CD4-positive, alpha-beta T cell (primary cell): ENCODE measurements at regions of chr2 and their contacts with region 1.

Region 1: GRCh38 chr2:38602732-38603401 is at the start of gene HNRNPLL:
- DNase-seq: peak; percentile 87 to 96 (median 94)
- ATAC-seq: peak; percentile 80
- H3K4me3 ChIP-seq: peak within 1 kb of the TSS; percentile 62
- H3K4me3 Mint-ChIP-seq: peak within 1 kb of the TSS; percentile 99
- H3K27ac ChIP-seq: peak within 1 kb of the TSS; percentile 58 to 66
- H3K27ac Mint-ChIP-seq: peak within 1 kb of the TSS; percentile 97
- H3K4me1 ChIP-seq: peaks cover 28% of the 10 kb centered on the region
- H3K4me1 Mint-ChIP-seq: peaks cover 56% of the 10 kb centered on the region
- H3K27me3 ChIP-seq: no peaks in the 10 kb centered on the region
- H3K27me3 Mint-ChIP-seq: no peaks in the 10 kb centered on the region
- CTCF ChIP-seq: no peak
- total RNA-seq, gene HNRNPLL: 44.9 to 46.5 TPM

Region 2: GRCh38 chr2:38590053-38590452 is 12.8 kb before region 1 on chr2:
- CTCF ChIA-PET with region 1: interaction called, 48 read pairs
- POLR2A ChIA-PET with region 1: interaction called, 12 read pairs
- intact Hi-C with region 1: no loop called
- DNase-seq: peak in 2 of 14 experiments; percentile 39 to 52
- ATAC-seq: peak; percentile 46
- H3K4me3 ChIP-seq: no peak overlapping the region
- H3K4me3 Mint-ChIP-seq: peak overlapping the region; percentile 3
- H3K27ac ChIP-seq: no peak overlapping the region
- H3K27ac Mint-ChIP-seq: peak overlapping the region; percentile 48
- H3K4me1 ChIP-seq: peaks cover 29% of the 10 kb centered on the region
- H3K4me1 Mint-ChIP-seq: peaks cover 51% of the 10 kb centered on the region
- H3K27me3 ChIP-seq: no peaks in the 10 kb centered on the region
- H3K27me3 Mint-ChIP-seq: no peaks in the 10 kb centered on the region
- CTCF ChIP-seq: no peak

Region 3: GRCh38 chr2:38653715-38654527 is 51.1 kb after region 1 on chr2:
- CTCF ChIA-PET with region 1: interaction called, 16 read pairs
- POLR2A ChIA-PET with region 1: interaction called, 15 read pairs
- intact Hi-C with region 1: no loop called
- DNase-seq: peak in 10 of 14 experiments; percentile 19 to 82 (median 52)
- ATAC-seq: peak; percentile 78
- H3K4me3 ChIP-seq: no peak overlapping the region
- H3K4me3 Mint-ChIP-seq: no peak overlapping the region
- H3K27ac ChIP-seq: peak overlapping the region in 1 of 2 donors; percentile 64
- H3K27ac Mint-ChIP-seq: peak overlapping the region; percentile 80
- H3K4me1 ChIP-seq: peaks cover 52% of the 10 kb centered on the region
- H3K4me1 Mint-ChIP-seq: peaks cover 33% of the 10 kb centered on the region
- H3K27me3 ChIP-seq: no peaks in the 10 kb centered on the region
- H3K27me3 Mint-ChIP-seq: no peaks in the 10 kb centered on the region
- CTCF ChIP-seq: no peak

Region 4: GRCh38 chr2:38682008-38682575 is 79.2 kb after region 1 on chr2:
- CTCF ChIA-PET with region 1: interaction called, 20 read pairs
- POLR2A ChIA-PET with region 1: interaction called, 15 read pairs
- intact Hi-C with region 1: loop called in 1 of 2 experiments (anchors 5 kb)
- DNase-seq: peak in 4 of 14 experiments; percentile 28 to 82 (median 76)
- ATAC-seq: peak; percentile 88
- H3K4me3 ChIP-seq: peak overlapping the region; percentile 31
- H3K4me3 Mint-ChIP-seq: peak overlapping the region; percentile 49
- H3K27ac ChIP-seq: peak overlapping the region; percentile 71 to 78
- H3K27ac Mint-ChIP-seq: peak overlapping the region; percentile 86
- H3K4me1 ChIP-seq: peaks cover 55% of the 10 kb centered on the region
- H3K4me1 Mint-ChIP-seq: peaks cover 50% of the 10 kb centered on the region
- H3K27me3 ChIP-seq: no peaks in the 10 kb centered on the region
- H3K27me3 Mint-ChIP-seq: no peaks in the 10 kb centered on the region
- CTCF ChIP-seq: peak; percentile 23

Region 5: DNA sequence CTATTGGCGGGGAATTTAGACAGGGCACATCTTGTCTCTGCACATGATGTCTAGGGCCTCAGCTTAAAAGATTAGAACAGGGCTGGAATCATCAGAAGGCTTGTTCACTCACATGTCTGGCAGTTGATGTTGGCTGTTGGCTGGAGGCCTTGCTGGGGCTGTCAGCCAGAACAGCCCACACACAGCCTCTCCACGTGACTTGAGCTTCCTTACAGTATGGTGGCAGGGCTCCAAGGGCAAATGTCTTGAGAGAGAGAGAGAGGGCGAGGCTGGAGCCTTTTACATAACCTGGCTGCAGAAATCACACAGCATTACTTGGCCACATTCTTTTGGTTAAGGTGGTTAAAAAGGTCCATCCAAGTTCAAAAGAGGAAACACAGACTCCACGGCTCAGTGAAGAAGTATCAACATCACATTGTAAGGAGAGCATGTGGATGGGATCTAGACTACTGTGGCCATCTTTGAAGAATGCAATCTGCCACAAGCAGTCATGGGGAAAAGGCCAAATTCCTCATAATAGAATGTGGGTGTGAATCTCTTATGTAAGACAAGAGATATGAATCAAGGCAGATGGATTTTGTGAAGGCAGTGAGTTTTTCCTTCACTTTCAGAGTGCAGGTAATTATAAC is 117.9 kb after region 1 on chr2:
- CTCF ChIA-PET with region 1: interaction called, 47 read pairs
- POLR2A ChIA-PET with region 1: interaction called, 8 read pairs
- intact Hi-C with region 1: no loop called
- DNase-seq: no peak
- ATAC-seq: no peak
- H3K4me3 ChIP-seq: no peak overlapping the region
- H3K4me3 Mint-ChIP-seq: no peak overlapping the region
- H3K27ac ChIP-seq: peak overlapping the region in 1 of 2 donors; percentile 7
- H3K27ac Mint-ChIP-seq: peak overlapping the region; percentile 25
- H3K4me1 ChIP-seq: peaks cover 37% of the 10 kb centered on the region
- H3K4me1 Mint-ChIP-seq: peaks cover 53% of the 10 kb centered on the region
- H3K27me3 ChIP-seq: no peaks in the 10 kb centered on the region
- H3K27me3 Mint-ChIP-seq: no peaks in the 10 kb centered on the region
- CTCF ChIP-seq: no peak